Dorsolateral prefrontal cortex (tissue), 120 donors: ENCODE measurements at regions of chr14 and their contacts with region 1.

Region 1: DNA sequence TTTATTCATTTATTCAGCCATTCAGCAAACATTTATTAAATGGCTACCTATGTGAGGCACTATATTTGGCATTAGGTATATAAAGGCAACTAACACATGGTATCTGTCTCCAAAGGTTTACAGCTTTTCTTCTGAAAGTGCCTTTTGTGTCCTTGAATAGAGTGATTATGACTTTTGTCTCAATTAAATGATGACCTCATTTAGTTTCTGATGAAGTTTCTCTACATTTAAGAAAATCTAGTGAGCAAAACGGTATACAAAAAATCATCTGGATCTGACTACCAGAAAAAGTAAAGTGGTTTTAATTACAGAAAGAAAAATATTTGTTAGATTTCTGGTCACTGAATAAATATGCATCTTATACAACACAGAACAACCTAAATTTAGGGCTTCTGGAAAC is 105.5 kb upstream of the NPAS3 start:
- DNase-seq: no peak
- H3K4me3 ChIP-seq: no peak overlapping the region
- H3K27ac ChIP-seq: peak overlapping the region in 5 of 59 donors; percentile 2 to 9 (median 7)
- H3K27me3 ChIP-seq: no peaks in the 10 kb centered on the region
- CTCF ChIP-seq: no peak

Region 2: GRCh38 chr14:32896979-32897697 is 64.0 kb after region 1 on chr14:
- intact Hi-C with region 1: loop called in 1 of 2 experiments (anchors 5 kb)
- DNase-seq: no peak
- H3K4me3 ChIP-seq: peak overlapping the region; percentile 30 to 75 (median 58)
- H3K27ac ChIP-seq: peak overlapping the region; percentile 23 to 88 (median 78)
- H3K27me3 ChIP-seq: no peaks in the 10 kb centered on the region
- CTCF ChIP-seq: peak in 1 of 56 donors; percentile 15

Region 3: GRCh38 chr14:32940066-32940651 is 107.0 kb after region 1 on chr14:
- intact Hi-C with region 1: no loop called
- DNase-seq: no peak
- H3K4me3 ChIP-seq: peak overlapping the region; percentile 24 to 79 (median 68)
- H3K27ac ChIP-seq: peak overlapping the region; percentile 70 to 98 (median 93)
- H3K27me3 ChIP-seq: peaks cover 0 to 4% (median 0%) of the 10 kb centered on the region in 45 donors
- CTCF ChIP-seq: peak in 2 of 56 donors; percentile 5 to 10